IMR-90 (cell line): ENCODE measurements at regions of chr6 and their contacts with region 1.

Region 1: GRCh38 chr6:163533443-163533842 is 118.9 kb downstream of the QKI start:
- DNase-seq: peak; percentile 97
- ATAC-seq: peak; percentile 75
- H3K4me3 ChIP-seq: no peak overlapping the region
- H3K27ac ChIP-seq: no peak overlapping the region
- H3K4me1 ChIP-seq: peaks cover 17% of the 10 kb centered on the region
- H3K27me3 ChIP-seq: no peaks in the 10 kb centered on the region
- CTCF ChIP-seq: no peak
- POLR2A ChIP-seq: no peak
- RAD21 ChIP-seq: no peak

Region 2: GRCh38 chr6:163405412-163406309 is 127.8 kb before region 1 on chr6:
- CTCF ChIA-PET with region 1: no interaction called
- POLR2A ChIA-PET with region 1: no interaction called
- dilution Hi-C with region 1: no loop called
- in situ Hi-C with region 1: no loop called
- intact Hi-C with region 1: no loop called
- DNase-seq: no peak
- ATAC-seq: peak; percentile 85
- H3K4me3 ChIP-seq: peak overlapping the region; percentile 53
- H3K27ac ChIP-seq: peak overlapping the region; percentile 91
- H3K4me1 ChIP-seq: peaks cover 3% of the 10 kb centered on the region
- H3K27me3 ChIP-seq: no peaks in the 10 kb centered on the region
- CTCF ChIP-seq: no peak
- POLR2A ChIP-seq: no peak
- RAD21 ChIP-seq: no peak

Region 3: GRCh38 chr6:163457637-163458561 is 75.5 kb before region 1 on chr6:
- CTCF ChIA-PET with region 1: interaction called, 3 read pairs
- POLR2A ChIA-PET with region 1: no interaction called
- dilution Hi-C with region 1: no loop called
- in situ Hi-C with region 1: no loop called
- intact Hi-C with region 1: loop called (anchors 5 kb)
- DNase-seq: peak; percentile 95
- ATAC-seq: peak; percentile 96
- H3K4me3 ChIP-seq: no peak overlapping the region
- H3K27ac ChIP-seq: peak overlapping the region; percentile 55; the same call in 1 of the 2 replicates
- H3K4me1 ChIP-seq: peaks cover 15% of the 10 kb centered on the region
- H3K27me3 ChIP-seq: no peaks in the 10 kb centered on the region
- CTCF ChIP-seq: no peak
- POLR2A ChIP-seq: no peak
- RAD21 ChIP-seq: no peak

Region 4: DNA sequence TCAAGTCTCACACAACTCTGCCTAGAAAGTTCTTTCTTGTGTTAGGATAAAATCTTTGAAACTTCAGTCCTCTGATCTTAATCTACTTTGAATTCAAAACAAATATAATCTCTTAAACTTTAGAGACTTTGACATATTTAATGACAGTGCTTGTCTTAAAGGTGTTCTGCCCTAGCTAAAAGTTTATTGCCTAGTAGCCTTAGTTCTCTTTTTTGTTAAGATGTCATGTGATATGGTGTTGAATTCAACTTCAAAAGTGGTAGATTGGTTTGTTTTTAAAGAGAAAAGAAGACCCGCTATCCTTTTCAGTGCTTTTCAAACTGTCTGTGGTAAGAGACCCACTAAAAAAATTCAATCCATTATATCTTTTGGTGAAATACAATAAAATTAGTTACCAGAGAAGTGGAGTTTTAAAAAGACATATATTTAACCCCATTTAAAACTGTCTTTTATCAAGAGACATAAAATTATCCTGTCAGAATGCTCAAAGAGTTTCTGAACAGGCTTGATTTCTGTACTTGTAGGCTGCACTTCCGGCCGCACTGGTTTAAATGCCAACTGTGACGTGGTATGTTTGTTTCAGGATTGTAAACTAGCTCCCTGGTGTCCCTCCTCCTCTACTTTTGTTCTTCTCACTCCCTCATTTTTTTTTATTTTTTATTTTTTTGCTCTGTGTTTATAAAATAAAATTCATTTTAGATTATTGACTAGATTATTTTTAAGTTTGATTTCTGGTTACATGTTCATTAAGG is 42.4 kb before region 1 on chr6:
- CTCF ChIA-PET with region 1: no interaction called
- POLR2A ChIA-PET with region 1: no interaction called
- dilution Hi-C with region 1: no loop called
- in situ Hi-C with region 1: no loop called
- intact Hi-C with region 1: loop called (anchors 5 kb)
- DNase-seq: peak; percentile 61
- ATAC-seq: peak; percentile 57; the same call in 1 of the 2 replicates
- H3K4me3 ChIP-seq: no peak overlapping the region
- H3K27ac ChIP-seq: no peak overlapping the region
- H3K4me1 ChIP-seq: peaks cover 1% of the 10 kb centered on the region; the same call in 1 of the 2 replicates
- H3K27me3 ChIP-seq: no peaks in the 10 kb centered on the region
- CTCF ChIP-seq: no peak
- POLR2A ChIP-seq: no peak
- RAD21 ChIP-seq: no peak

Region 5: DNA sequence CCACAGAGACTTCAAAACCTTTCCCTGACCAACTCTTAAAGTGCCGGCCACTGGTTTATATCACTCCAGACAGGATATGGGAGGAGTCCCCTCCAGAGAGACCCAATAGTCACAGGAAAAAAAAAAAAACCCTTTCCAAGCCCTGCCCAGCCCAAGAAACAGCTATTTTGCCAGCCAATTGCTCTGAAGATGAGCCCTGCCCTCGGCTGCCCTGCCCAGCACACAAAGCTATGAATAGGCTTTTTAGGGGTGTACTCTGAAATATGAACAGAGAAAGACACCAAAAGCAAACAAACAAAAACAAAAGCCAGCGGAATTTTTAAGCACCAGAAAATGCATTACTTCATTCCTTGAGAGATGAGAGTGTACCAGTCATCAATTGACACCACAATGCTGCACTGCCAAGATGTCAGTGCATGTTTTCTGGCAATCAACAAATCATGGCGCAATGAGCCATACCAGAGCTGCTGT is 1500.9 kb after region 1 on chr6:
- CTCF ChIA-PET with region 1: no interaction called
- POLR2A ChIA-PET with region 1: no interaction called
- dilution Hi-C with region 1: no loop called
- in situ Hi-C with region 1: no loop called
- intact Hi-C with region 1: no loop called
- DNase-seq: no peak
- ATAC-seq: peak; percentile 24; the same call in 1 of the 2 replicates
- H3K4me3 ChIP-seq: no peak overlapping the region
- H3K27ac ChIP-seq: no peak overlapping the region
- H3K4me1 ChIP-seq: no peaks in the 10 kb centered on the region
- H3K27me3 ChIP-seq: no peaks in the 10 kb centered on the region
- CTCF ChIP-seq: no peak
- POLR2A ChIP-seq: no peak
- RAD21 ChIP-seq: no peak